Astrocyte of the cerebellum (primary cell): ENCODE measurements at regions of chr2 and their contacts with region 1.

Region 1: DNA sequence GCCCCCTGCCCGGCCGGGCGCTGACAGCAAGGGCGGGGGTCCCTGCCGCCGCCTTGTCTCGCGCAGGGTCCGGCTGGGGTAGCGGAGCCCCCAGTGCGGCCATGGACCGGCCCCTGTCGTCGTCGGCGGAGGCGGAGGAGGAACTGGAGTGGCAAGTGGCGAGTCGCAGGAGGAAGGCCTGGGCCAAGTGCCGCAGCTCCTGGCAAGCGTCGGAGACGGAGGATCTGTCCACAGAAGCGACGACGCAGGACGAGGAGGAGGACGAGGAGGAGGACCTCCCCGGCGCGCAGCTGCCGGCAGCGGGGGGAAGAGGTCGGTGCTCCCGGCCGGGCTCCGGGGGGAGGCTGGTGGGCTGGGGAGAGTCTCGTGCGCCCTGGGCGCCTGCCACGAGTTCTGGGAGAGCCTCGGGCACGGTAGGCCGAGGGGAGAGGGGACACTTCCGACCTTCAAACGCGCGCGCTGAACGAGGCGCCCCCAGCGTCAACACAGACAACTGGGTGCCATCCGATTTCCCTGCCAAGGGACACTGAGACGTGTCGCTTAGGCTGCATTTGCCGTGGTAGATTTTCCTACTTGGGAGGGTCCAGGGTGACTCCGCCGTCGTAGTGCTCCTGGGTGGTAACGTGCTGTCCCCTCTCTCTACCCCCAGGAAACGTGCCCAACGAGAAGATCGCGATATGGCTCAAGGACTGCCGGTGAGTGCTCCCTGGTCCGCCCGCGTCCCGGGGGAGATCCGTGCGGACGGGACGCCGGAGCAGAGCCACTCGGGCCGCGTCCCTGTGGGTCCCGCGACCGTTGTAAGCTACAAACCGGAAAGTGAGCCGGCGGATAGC is 652 bp downstream of the ITPRID2 start:
- DNase-seq: no peak
- H3K4me3 ChIP-seq: peak overlapping the region; percentile 92
- CTCF ChIP-seq: no peak

Region 2: GRCh38 chr2:181774685-181775084 is 117.5 kb before region 1 on chr2:
- in situ Hi-C with region 1: loop called (anchors 25 kb)
- DNase-seq: no peak
- H3K4me3 ChIP-seq: no peak overlapping the region
- CTCF ChIP-seq: no peak

Region 3: DNA sequence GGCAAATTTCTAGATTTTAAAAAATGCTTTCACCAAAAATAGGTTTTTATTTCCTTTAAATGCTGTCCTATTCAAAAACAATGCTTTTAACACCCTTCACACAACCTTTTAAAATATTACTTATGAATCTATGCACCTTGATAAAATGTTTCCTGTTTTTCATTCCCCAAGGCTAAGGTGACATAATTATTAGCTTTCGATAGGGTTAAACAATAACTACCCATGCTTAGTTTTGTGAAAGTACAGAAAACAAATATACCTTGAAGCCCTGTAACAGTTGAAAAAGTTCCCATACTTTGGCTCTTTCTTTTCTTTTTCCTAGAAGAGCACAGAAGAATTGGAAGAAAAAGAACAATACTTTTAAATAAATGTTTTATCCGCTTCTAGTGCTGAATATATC is 55.6 kb before region 1 on chr2:
- in situ Hi-C with region 1: no loop called
- DNase-seq: no peak
- H3K4me3 ChIP-seq: no peak overlapping the region
- CTCF ChIP-seq: no peak